Gastrocnemius medialis (tissue), 4 donors: ENCODE measurements at regions of chr11 and their contacts with region 1.

Region 1: GRCh38 chr11:6362873-6363678 is 27.2 kb upstream of the SMPD1 start:
- DNase-seq: peak; percentile 77 to 89
- ATAC-seq: peak; percentile 84 to 85
- H3K4me3 ChIP-seq: peak overlapping the region in 2 of 4 donors; percentile 1 to 32
- H3K27ac ChIP-seq: peak overlapping the region; percentile 83 to 89 (median 86)
- H3K4me1 ChIP-seq: peaks cover 7% of the 10 kb centered on the region in 2 donors
- H3K27me3 ChIP-seq: no peaks in the 10 kb centered on the region
- CTCF ChIP-seq: peak; percentile 86 to 92 (median 89)
- POLR2A ChIP-seq: no peak

Region 2: GRCh38 chr11:6022956-6023355 is 340.1 kb before region 1 on chr11:
- in situ Hi-C with region 1: loop called in 3 of 4 experiments (anchors 10 to 25 kb)
- intact Hi-C with region 1: loop called (anchors 5 kb)
- DNase-seq: no peak
- ATAC-seq: no peak
- H3K4me3 ChIP-seq: no peak overlapping the region
- H3K27ac ChIP-seq: no peak overlapping the region
- H3K4me1 ChIP-seq: no peaks in the 10 kb centered on the region
- H3K27me3 ChIP-seq: no peaks in the 10 kb centered on the region
- CTCF ChIP-seq: peak in 3 of 5 experiments; percentile 17 to 43 (median 39)
- POLR2A ChIP-seq: no peak

Region 3: GRCh38 chr11:6116638-6117037 is 246.4 kb before region 1 on chr11:
- in situ Hi-C with region 1: no loop called
- intact Hi-C with region 1: no loop called
- DNase-seq: no peak
- ATAC-seq: no peak
- H3K4me3 ChIP-seq: no peak overlapping the region
- H3K27ac ChIP-seq: no peak overlapping the region
- H3K4me1 ChIP-seq: no peaks in the 10 kb centered on the region
- H3K27me3 ChIP-seq: no peaks in the 10 kb centered on the region
- CTCF ChIP-seq: no peak
- POLR2A ChIP-seq: no peak

Region 4: GRCh38 chr11:6234387-6235107 is 128.5 kb before region 1 on chr11 and contains the start of gene FHIP1B:
- in situ Hi-C with region 1: loop called in 1 of 4 experiments (anchors 25 kb)
- intact Hi-C with region 1: loop called (anchors 2 kb)
- DNase-seq: peak; percentile 100
- ATAC-seq: peak; percentile 96 to 98
- H3K4me3 ChIP-seq: peak within 1 kb of the TSS; percentile 73 to 79 (median 76)
- H3K27ac ChIP-seq: peak within 1 kb of the TSS; percentile 81 to 88 (median 86)
- H3K4me1 ChIP-seq: peaks cover 14 to 24% of the 10 kb centered on the region in 2 donors
- H3K27me3 ChIP-seq: no peaks in the 10 kb centered on the region
- CTCF ChIP-seq: no peak
- POLR2A ChIP-seq: peak; percentile 47 to 60
- total RNA-seq, gene FHIP1B: 23.9 to 41.7 (median 33.9) TPM

Region 5: GRCh38 chr11:6305297-6305696 is 57.8 kb before region 1 on chr11:
- in situ Hi-C with region 1: no loop called
- intact Hi-C with region 1: no loop called
- DNase-seq: no peak
- ATAC-seq: no peak
- H3K4me3 ChIP-seq: no peak overlapping the region
- H3K27ac ChIP-seq: no peak overlapping the region
- H3K4me1 ChIP-seq: no peaks in the 10 kb centered on the region
- H3K27me3 ChIP-seq: no peaks in the 10 kb centered on the region
- CTCF ChIP-seq: no peak
- POLR2A ChIP-seq: no peak

Region 6: GRCh38 chr11:6402561-6402981 is 39.5 kb after region 1 on chr11:
- in situ Hi-C with region 1: no loop called
- intact Hi-C with region 1: no loop called
- DNase-seq: no peak
- ATAC-seq: no peak
- H3K4me3 ChIP-seq: no peak overlapping the region
- H3K27ac ChIP-seq: no peak overlapping the region
- H3K4me1 ChIP-seq: no peaks in the 10 kb centered on the region
- H3K27me3 ChIP-seq: no peaks in the 10 kb centered on the region
- CTCF ChIP-seq: no peak
- POLR2A ChIP-seq: no peak